ENCODE measurements at regions of chr22 and their contacts with region 1.

Region 1: GRCh38 chr22:40436505-40437451 is 66.4 kb downstream of the SGSM3 start:
- DNase-seq: peak in 3 of 4 donors; percentile 53 to 65 (median 64)
- ATAC-seq: peak; percentile 81
- H3K4me3 ChIP-seq: no peak overlapping the region
- H3K27ac ChIP-seq: peak overlapping the region; percentile 70 to 75
- H3K4me1 ChIP-seq: peaks cover 16 to 99% of the 10 kb centered on the region in 2 donors
- H3K27me3 ChIP-seq: no peaks in the 10 kb centered on the region
- CTCF ChIP-seq: peak; percentile 47 to 58

Region 2: DNA sequence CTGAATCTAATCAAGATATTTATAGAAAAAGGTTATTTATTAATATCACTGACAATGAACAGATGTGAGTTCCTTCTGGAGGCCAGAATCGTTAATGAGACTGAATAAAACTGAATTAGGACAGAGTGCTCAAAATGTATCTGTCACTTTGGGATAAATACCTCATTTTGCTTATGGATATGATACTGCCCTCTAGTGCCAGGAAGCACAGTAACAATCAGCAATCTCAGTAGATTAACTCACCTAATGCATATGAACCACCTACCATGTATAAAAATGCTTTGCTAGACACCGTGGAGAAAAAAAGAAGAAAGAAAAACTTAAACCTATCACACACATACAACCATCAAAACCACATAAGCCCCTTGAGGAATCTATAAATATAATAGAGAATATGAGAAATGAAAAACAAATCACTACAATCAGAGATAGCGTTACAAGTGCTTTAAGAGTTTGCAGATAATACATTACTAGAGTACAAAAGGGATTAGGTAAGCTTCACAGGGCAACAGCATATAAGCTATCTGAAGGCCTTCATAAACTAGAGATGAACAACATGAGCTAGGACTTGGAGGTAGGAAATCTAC is 51.0 kb after region 1 on chr22:
- intact Hi-C with region 1: loop called in 1 of 2 experiments (anchors 10 kb)
- DNase-seq: no peak
- ATAC-seq: peak; percentile 33
- H3K4me3 ChIP-seq: no peak overlapping the region
- H3K27ac ChIP-seq: no peak overlapping the region
- H3K4me1 ChIP-seq: peaks cover 29 to 72% of the 10 kb centered on the region in 2 donors
- H3K27me3 ChIP-seq: no peaks in the 10 kb centered on the region
- CTCF ChIP-seq: peak; percentile 51 to 58

Region 3: GRCh38 chr22:40641269-40641668 is 204.5 kb after region 1 on chr22:
- intact Hi-C with region 1: loop called in 1 of 2 experiments (anchors 5 kb)
- DNase-seq: no peak
- ATAC-seq: no peak
- H3K4me3 ChIP-seq: no peak overlapping the region
- H3K27ac ChIP-seq: no peak overlapping the region
- H3K4me1 ChIP-seq: peaks cover 5 to 23% of the 10 kb centered on the region in 2 donors
- H3K27me3 ChIP-seq: no peaks in the 10 kb centered on the region
- CTCF ChIP-seq: no peak

Region 4: DNA sequence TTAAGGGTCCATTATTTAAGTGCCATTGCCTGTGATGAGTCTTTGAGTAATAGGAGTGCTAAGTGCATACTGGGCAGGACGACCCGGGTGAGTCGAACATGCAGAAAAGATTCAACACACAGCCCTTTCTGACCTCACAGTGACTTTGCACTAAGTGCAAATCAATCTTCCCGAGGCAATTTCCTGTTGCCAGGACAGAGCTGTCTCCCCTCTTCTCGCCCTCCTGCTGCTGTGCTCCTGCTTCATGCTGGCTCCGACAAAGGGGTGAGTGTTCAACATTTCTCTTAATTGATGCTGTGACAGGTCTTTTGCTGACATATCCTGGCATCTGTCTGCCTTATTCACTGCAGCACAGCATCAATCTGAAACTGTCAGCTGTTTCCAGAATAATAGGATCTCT is 284.5 kb after region 1 on chr22:
- intact Hi-C with region 1: no loop called
- DNase-seq: no peak
- ATAC-seq: peak; percentile 21
- H3K4me3 ChIP-seq: no peak overlapping the region
- H3K27ac ChIP-seq: no peak overlapping the region
- H3K4me1 ChIP-seq: no peaks in the 10 kb centered on the region
- H3K27me3 ChIP-seq: no peaks in the 10 kb centered on the region
- CTCF ChIP-seq: no peak

Measured in left lung (tissue), 14 donors.